ENCODE measurements at regions of chr12 and their contacts with region 1.

Region 1: GRCh38 chr12:82326905-82327503 is 31.2 kb downstream of the CCDC59 start:
- DNase-seq: no peak
- ATAC-seq: peak; percentile 31

Region 2: DNA sequence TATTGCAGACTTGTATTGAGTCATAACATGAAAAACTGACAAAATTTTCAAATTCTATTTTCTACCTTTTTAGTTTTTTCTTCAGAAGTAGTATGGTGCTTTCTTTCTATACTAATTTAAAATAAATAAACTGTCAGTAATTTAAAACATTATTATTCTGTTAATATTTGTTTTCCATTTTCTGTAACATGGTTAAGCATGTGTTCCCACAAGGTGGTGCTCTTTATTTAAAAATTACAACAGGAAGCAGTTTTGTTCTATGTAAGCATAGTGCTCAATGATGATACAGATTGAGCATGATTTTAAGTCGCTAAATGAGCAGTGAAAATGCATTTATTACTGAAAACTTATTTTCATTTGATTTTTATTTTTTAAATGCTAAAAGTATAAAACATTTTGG is 682.5 kb before region 1 on chr12:
- intact Hi-C with region 1: loop called (anchors 5 to 10 kb)
- DNase-seq: no peak
- ATAC-seq: no peak

Region 3: GRCh38 chr12:82517027-82517426 is 190.0 kb after region 1 on chr12:
- intact Hi-C with region 1: no loop called
- DNase-seq: no peak
- ATAC-seq: peak; percentile 63